CD8-positive, alpha-beta memory T cell (primary cell): ENCODE measurements at regions of chr5 and their contacts with region 1.

Region 1: GRCh38 chr5:132526290-132526973 is 16.9 kb downstream of the IL5 start:
- DNase-seq: peak in 4 of 5 donors; percentile 5 to 50 (median 44)
- H3K4me3 ChIP-seq: no peak overlapping the region
- H3K4me3 Mint-ChIP-seq: peak overlapping the region in 2 of 7 donors; percentile 25 to 71
- H3K27ac ChIP-seq: no peak overlapping the region
- H3K27ac Mint-ChIP-seq: no peak overlapping the region
- H3K4me1 ChIP-seq: peaks cover 6% of the 10 kb centered on the region
- H3K4me1 Mint-ChIP-seq: peaks cover 4 to 19% (median 10%) of the 10 kb centered on the region in 3 donors
- H3K27me3 ChIP-seq: no peaks in the 10 kb centered on the region
- H3K27me3 Mint-ChIP-seq: peaks cover 2 to 5% of the 10 kb centered on the region in 2 donors

Region 2: DNA sequence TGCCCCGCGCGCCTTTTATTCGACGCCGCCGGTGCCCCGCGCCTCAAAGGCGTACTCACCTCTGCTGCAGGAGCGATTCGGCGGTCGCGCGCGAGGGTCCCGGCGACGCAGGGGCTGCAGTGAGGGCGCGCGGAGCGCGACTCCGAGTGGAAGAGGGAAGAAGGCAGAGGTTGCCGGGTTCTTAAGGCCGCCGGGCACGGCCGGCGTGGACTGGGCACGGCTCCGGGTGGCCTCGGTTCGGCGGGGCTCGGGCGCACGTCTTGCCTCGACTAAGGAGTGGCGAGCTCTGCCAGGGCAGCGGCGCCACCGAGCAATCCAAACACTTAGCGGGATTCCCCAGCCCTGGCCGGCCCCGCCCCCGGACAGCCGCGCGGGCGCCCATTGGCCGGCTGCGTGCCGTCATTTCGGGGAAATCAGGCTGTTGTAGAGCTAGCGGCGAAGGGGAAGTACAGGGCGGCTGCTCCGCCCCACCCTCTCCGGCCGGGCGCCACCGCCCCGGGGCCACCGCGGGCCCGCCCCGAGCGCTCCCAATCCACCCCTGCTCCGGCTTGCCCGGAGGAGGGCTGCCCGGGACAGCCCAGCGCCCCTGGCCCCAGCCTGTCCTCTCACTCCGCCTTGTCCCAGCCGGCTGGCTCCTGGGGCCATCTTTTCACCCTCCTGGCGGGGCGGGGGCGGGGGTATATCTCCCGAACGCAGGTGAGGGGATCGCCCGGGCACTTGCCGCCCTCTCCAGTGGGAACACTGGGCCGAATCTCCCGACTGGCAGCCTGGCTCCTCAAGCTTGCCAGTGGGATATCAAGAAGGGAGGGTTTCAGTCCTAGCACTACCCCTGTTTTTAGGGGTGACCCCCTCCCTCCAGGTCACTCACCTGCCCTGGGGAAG is 35.7 kb before region 1 on chr5 and contains the start of gene IRF1:
- CTCF ChIA-PET with region 1: no interaction called
- POLR2A ChIA-PET with region 1: no interaction called
- DNase-seq: peak; percentile 95 to 99 (median 98)
- H3K4me3 ChIP-seq: peak within 1 kb of the TSS; percentile 88
- H3K4me3 Mint-ChIP-seq: peak within 1 kb of the TSS; percentile 88 to 99 (median 96)
- H3K27ac ChIP-seq: peak within 1 kb of the TSS; percentile 96
- H3K27ac Mint-ChIP-seq: peak within 1 kb of the TSS; percentile 97 to 100 (median 98)
- H3K4me1 ChIP-seq: peaks cover 80% of the 10 kb centered on the region
- H3K4me1 Mint-ChIP-seq: peaks cover 69 to 80% (median 77%) of the 10 kb centered on the region in 3 donors
- H3K27me3 ChIP-seq: no peaks in the 10 kb centered on the region
- H3K27me3 Mint-ChIP-seq: peaks cover 0 to 13% of the 10 kb centered on the region in 2 donors
- total RNA-seq, gene IRF1: 115 to 121 TPM

Region 3: DNA sequence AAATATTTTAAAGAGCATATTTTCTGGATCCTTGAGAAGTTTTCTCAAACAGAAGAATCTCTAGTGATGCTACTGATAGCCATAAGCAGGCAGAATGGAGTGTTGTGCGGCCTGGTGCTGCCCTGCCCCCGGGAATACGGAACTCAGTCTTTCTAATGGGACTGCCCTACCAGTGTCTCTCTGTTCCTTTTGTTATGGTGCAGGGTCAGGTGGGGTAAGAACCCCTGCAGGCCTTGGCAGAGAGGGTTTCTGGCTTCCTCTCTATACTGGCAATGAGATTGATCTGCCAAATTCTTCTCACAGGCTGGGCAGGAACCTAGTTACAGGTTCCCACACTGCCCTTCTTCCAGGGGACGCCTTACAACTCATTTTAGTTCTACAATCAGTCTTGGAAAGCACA is 14.3 kb after region 1 on chr5:
- CTCF ChIA-PET with region 1: interaction called, 12 read pairs
- POLR2A ChIA-PET with region 1: no interaction called
- DNase-seq: no peak
- H3K4me3 ChIP-seq: no peak overlapping the region
- H3K4me3 Mint-ChIP-seq: no peak overlapping the region
- H3K27ac ChIP-seq: no peak overlapping the region
- H3K27ac Mint-ChIP-seq: peak overlapping the region in 1 of 8 donors; percentile 22
- H3K4me1 ChIP-seq: no peaks in the 10 kb centered on the region
- H3K4me1 Mint-ChIP-seq: no peaks in the 10 kb centered on the region
- H3K27me3 ChIP-seq: no peaks in the 10 kb centered on the region
- H3K27me3 Mint-ChIP-seq: peaks cover 8 to 9% of the 10 kb centered on the region in 2 donors